ENCODE measurements at regions of chr7 and their contacts with region 1.

Region 1: DNA sequence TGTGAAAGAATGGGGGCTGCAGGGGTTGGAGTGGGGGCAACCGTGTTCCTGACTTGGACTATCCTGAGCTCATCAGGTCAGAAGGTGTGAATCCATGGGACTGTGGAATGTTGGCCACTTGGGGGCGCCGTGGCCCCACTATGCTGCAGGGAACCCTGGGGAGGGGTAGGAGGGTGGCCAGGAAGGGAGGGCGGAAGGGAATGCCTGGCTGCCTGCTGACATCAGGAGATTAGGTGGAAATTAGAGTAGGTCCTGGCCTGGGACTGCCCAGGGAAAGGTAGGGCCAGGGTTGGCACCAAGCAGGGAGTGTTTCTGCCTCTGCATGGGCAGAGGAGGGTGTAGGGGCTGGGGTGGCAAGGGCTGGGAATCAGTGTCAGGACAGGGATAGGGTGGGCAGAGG is 65.8 kb upstream of the PRSS58 start:
- DNase-seq: peak in 9 of 10 donors; percentile 45 to 81 (median 63)
- H3K4me3 ChIP-seq: no peak overlapping the region
- H3K27ac ChIP-seq: no peak overlapping the region
- H3K27me3 ChIP-seq: peaks cover 0 to 4% (median 0%) of the 10 kb centered on the region in 45 donors
- CTCF ChIP-seq: peak in 54 of 56 donors; percentile 16 to 83 (median 59)

Region 2: GRCh38 chr7:141820067-141820466 is 503.6 kb before region 1 on chr7:
- intact Hi-C with region 1: no loop called
- DNase-seq: no peak
- H3K4me3 ChIP-seq: no peak overlapping the region
- H3K27ac ChIP-seq: no peak overlapping the region
- H3K27me3 ChIP-seq: no peaks in the 10 kb centered on the region
- CTCF ChIP-seq: no peak

Region 3: DNA sequence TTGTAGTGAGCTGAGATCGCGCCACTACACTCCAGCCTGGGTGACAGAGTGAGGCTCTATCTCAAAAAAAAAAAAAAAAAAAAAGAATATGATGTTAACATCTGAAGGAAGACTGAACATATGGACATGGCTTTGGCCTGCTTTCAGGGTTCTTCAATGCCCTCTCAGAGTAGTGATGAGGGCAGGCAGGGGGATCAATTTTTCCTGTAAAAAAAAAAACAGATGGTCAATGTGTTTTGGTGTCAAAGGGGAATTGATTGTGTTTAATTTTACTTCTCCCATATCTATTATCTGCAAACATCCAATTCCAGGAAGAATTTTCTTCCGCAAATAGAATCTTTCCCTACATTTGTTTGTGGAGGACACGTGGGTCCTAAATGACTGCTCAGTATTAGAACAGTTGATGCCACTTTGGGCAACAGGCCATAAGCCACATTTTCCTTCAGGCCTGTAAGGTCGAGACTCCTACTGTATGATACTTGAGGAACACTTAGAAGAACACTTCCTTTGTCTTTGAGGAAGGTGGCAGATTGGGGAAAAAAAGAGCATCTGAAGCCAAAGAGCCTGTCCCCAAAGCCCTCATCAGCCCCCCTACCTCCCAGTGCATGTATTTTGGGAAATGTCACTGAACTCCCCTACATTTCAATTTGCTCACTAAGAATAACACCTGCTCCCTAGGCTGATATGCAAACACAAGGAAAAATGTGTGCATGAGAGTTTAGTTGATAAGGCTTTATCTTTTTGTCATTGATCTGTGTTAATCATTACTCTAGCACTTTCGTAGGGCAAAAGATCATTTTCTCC is 183.9 kb before region 1 on chr7:
- intact Hi-C with region 1: no loop called
- DNase-seq: no peak
- H3K4me3 ChIP-seq: no peak overlapping the region
- H3K27ac ChIP-seq: no peak overlapping the region
- H3K27me3 ChIP-seq: peaks cover 0 to under 1% (median 0%) of the 10 kb centered on the region in 45 donors
- CTCF ChIP-seq: no peak

Region 4: DNA sequence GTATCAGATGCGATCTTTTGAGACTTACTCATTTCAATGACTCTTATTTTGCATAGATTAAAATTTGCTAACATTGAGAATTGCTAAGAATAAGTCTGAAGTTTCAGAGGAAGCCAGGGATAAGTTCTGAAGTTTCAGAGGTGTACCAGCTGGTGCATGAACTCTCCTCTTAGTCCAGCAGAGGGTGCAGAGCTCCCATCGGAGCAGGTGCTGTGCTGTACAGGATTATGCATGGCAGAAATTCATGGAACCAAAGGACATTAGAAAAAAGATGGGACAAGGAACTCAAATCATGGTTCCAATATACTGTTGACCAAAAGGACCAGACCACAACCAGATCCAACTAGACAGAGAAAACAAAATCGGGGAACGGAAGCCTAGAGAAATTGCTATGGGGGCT is 170.3 kb before region 1 on chr7:
- intact Hi-C with region 1: no loop called
- DNase-seq: no peak
- H3K4me3 ChIP-seq: no peak overlapping the region
- H3K27ac ChIP-seq: no peak overlapping the region
- H3K27me3 ChIP-seq: peaks cover 0 to 11% (median 0%) of the 10 kb centered on the region in 45 donors
- CTCF ChIP-seq: no peak

Region 5: GRCh38 chr7:142459551-142459963 is 135.9 kb after region 1 on chr7:
- intact Hi-C with region 1: loop called in 1 of 2 experiments (anchors 5 kb)
- DNase-seq: peak in 1 of 10 donors; percentile 32
- H3K4me3 ChIP-seq: no peak overlapping the region
- H3K27ac ChIP-seq: no peak overlapping the region
- H3K27me3 ChIP-seq: peaks cover 0 to 4% (median 0%) of the 10 kb centered on the region in 45 donors
- CTCF ChIP-seq: peak; percentile 55 to 90 (median 82)

Region 6: DNA sequence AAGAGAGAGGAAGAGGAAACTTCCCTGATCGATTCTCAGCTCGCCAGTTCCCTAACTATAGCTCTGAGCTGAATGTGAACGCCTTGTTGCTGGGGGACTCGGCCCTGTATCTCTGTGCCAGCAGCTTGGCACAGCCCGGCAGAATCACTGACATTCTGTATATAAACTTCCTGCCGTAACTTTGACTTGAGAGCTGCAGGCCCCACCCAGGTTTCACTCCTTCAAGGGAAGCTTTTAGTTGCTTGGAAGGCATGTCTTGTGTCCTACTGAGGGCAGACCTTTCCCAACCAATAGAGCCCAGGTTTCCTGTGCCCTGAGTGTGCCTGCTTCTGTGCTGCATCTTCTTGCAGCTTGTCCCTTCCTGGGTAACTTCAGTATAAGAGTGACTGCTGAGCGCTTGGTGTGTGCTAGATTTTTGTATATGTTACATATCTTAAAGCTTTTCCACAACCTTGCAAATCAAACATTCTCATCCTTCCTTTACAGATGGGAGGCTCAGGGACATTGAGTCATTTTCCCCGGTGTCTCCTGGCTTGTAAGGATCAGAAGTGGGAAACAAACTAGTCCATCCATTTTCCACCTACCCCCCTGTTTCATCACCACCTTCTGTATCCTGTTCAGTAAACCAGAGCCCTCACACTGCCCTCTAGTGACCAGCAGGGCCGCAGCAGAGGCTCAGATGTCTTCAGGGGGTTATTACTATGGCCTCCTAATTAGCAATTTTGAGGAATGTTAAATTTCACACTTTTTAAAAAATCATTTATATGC is 159.4 kb after region 1 on chr7:
- intact Hi-C with region 1: loop called in 1 of 2 experiments (anchors 10 kb)
- DNase-seq: peak in 7 of 10 donors; percentile 40 to 71 (median 62)
- H3K4me3 ChIP-seq: no peak overlapping the region
- H3K27ac ChIP-seq: no peak overlapping the region
- H3K27me3 ChIP-seq: peaks cover 0 to 4% (median 0%) of the 10 kb centered on the region in 45 donors
- CTCF ChIP-seq: peak in 55 of 56 donors; percentile 32 to 86 (median 68)

Region 7: DNA sequence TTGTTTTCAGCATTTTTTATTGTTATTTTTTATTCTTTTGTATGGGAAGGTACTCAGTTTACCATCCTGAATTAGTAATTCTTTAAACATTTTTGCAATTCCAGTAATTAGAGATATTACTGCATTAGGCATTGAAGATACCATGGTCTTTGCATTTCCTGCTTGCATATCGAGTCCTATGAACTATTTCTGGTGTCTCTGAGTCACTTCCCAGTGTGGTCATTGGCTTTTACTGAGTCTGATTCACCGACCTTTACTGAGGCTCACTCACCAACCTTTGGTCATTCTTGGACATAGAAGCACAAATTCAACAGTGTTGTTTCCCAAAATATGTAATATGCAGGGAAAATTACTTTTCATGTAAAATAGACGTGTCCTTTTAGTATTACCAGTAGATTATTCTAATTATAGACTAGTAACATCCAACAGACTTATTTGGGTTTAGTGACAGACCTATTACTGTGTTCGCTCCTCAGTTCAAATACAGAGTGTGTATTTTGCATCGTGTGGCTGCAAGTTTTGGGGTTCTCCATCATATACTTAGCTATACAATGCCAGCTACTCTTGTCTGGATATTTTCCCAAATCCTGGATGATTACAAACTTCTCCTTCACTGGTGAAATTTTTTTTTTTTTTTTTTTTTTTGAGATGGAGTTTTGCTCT is 244.9 kb after region 1 on chr7:
- intact Hi-C with region 1: no loop called
- DNase-seq: no peak
- H3K4me3 ChIP-seq: no peak overlapping the region
- H3K27ac ChIP-seq: no peak overlapping the region
- H3K27me3 ChIP-seq: peaks cover 0 to 28% (median 5%) of the 10 kb centered on the region in 45 donors
- CTCF ChIP-seq: no peak